ENCODE measurements at regions of chr14 and their contacts with region 1.

Region 1: DNA sequence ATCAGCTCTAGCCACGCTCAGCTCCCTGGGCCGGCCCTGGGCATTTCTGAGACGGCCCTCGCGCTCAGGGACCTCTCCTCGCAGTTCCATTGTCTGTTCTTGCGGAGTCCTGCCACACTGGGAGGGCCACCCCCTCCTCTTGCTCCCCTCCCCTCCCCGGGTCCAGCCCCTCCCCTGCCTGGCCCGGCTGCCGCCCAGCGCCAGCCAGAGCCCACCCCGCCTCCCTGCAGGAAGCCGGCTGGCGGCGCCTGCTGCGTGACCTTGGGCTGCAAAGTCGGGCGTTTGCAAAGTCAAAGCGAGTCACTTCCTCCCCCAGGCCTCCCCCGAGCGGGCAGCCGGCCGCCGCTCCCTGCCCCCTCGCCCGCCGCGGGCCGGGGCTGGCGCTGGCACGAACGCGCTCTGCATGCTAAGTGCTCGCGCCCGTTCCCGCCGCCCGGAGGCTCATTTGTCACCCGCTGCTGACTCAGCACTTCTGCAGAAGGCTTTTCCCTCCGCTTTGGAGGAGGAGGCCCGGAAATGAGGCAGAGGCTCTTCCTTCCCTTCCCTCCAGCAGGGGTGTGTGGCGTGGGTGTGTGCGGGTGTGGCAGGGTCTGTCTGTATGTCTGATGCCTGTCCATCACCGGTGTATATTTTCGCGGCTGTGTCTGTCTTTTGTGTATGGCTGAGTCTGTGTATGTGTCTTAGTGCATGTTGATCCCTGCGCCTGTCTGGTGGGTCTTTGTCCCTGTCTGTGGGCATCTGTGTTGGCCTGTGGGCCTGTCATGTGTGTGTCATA is 72.0 kb downstream of the IRF2BPL start:
- DNase-seq: peak; percentile 99
- H3K4me3 ChIP-seq: peak overlapping the region; percentile 36 to 50 (median 41)
- H3K4me3 Mint-ChIP-seq: peak overlapping the region; percentile 77 to 86
- H3K27ac ChIP-seq: peak overlapping the region; percentile 96 to 99
- H3K27ac Mint-ChIP-seq: peak overlapping the region; percentile 98 to 100 (median 99)
- H3K4me1 ChIP-seq: peaks cover 56 to 64% of the 10 kb centered on the region in 2 donors
- H3K4me1 Mint-ChIP-seq: peaks cover 71% of the 10 kb centered on the region
- H3K27me3 ChIP-seq: no peaks in the 10 kb centered on the region
- H3K27me3 Mint-ChIP-seq: peaks cover 1 to 8% (median 1%) of the 10 kb centered on the region in 3 donors
- CTCF ChIP-seq: no peak

Region 2: GRCh38 chr14:76918751-76919543 is 37.6 kb before region 1 on chr14:
- intact Hi-C with region 1: loop called (anchors 2 to 5 kb)
- DNase-seq: peak; percentile 61 to 75 (median 75)
- H3K4me3 ChIP-seq: peak overlapping the region in 1 of 3 experiments; percentile 19
- H3K4me3 Mint-ChIP-seq: peak overlapping the region in 1 of 2 donors; percentile 82
- H3K27ac ChIP-seq: peak overlapping the region; percentile 50 to 86
- H3K27ac Mint-ChIP-seq: peak overlapping the region; percentile 89 to 96 (median 94)
- H3K4me1 ChIP-seq: peaks cover 45 to 54% of the 10 kb centered on the region in 2 donors
- H3K4me1 Mint-ChIP-seq: peaks cover 52% of the 10 kb centered on the region
- H3K27me3 ChIP-seq: no peaks in the 10 kb centered on the region
- H3K27me3 Mint-ChIP-seq: peaks cover 18 to 32% (median 22%) of the 10 kb centered on the region in 3 donors
- CTCF ChIP-seq: no peak

Region 3: GRCh38 chr14:77033622-77034521 is 77.4 kb after region 1 on chr14:
- intact Hi-C with region 1: loop called in 1 of 2 experiments (anchors 5 kb)
- DNase-seq: peak; percentile 89 to 92 (median 89)
- H3K4me3 ChIP-seq: peak overlapping the region; percentile 29 to 65 (median 53)
- H3K4me3 Mint-ChIP-seq: peak overlapping the region; percentile 83 to 90
- H3K27ac ChIP-seq: peak overlapping the region; percentile 98
- H3K27ac Mint-ChIP-seq: peak overlapping the region; percentile 97 to 99 (median 99)
- H3K4me1 ChIP-seq: peaks cover 74 to 79% of the 10 kb centered on the region in 2 donors
- H3K4me1 Mint-ChIP-seq: peaks cover 74% of the 10 kb centered on the region
- H3K27me3 ChIP-seq: no peaks in the 10 kb centered on the region
- H3K27me3 Mint-ChIP-seq: peaks cover 0 to 7% (median 1%) of the 10 kb centered on the region in 3 donors
- CTCF ChIP-seq: no peak

Region 4: DNA sequence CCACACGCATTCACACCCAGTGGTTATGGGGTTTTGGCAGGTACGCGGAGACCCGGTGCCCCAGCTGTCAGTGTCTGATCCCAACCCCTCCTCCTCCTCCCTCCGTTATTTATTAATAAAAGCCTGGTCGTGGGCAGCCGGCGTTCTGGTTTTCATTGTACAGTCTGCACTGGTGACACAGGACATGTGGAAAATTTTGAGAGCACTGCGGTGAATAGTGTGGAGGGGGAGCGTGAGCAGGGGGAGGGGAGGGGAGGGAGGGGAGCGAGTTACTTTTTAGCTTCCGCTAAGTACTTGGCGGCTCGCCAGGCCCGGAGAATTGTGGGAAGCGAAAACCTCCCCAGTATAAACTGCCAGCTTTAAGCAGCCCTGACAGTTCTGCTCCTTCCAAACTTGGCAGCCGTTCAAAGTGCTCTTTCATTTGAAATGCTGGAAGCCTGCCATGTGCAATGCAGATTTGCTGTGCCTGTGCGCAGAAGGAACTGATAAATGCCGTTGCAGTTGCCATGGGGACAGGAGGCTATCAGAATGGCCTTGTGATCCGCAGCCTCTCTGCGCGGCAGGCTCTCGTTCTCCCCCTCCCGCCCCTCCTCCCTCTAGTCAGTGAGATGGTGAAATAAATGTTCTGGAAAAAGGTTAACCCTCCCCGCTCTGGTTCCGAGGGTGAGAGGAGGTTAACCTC is 83.7 kb after region 1 on chr14:
- intact Hi-C with region 1: loop called in 1 of 2 experiments (anchors 5 kb)
- DNase-seq: peak; percentile 97 to 99 (median 97)
- H3K4me3 ChIP-seq: peak overlapping the region; percentile 31 to 67 (median 38)
- H3K4me3 Mint-ChIP-seq: peak overlapping the region; percentile 73 to 86
- H3K27ac ChIP-seq: peak overlapping the region; percentile 93 to 95
- H3K27ac Mint-ChIP-seq: peak overlapping the region; percentile 94 to 99 (median 99)
- H3K4me1 ChIP-seq: peaks cover 87 to 92% of the 10 kb centered on the region in 2 donors
- H3K4me1 Mint-ChIP-seq: peaks cover 91% of the 10 kb centered on the region
- H3K27me3 ChIP-seq: no peaks in the 10 kb centered on the region
- H3K27me3 Mint-ChIP-seq: peaks cover 0 to 7% (median 0%) of the 10 kb centered on the region in 3 donors
- CTCF ChIP-seq: no peak